ENCODE measurements at regions of chr5 and their contacts with region 1.

Region 1: GRCh38 chr5:106258591-106259125 is 1412.1 kb downstream of the EFNA5 start:
- DNase-seq: peak in 1 of 2 experiments; percentile 4
- H3K4me3 ChIP-seq: no peak overlapping the region
- H3K4me3 Mint-ChIP-seq: peak overlapping the region; percentile 66
- H3K27ac Mint-ChIP-seq: peak overlapping the region; percentile 86
- H3K4me1 ChIP-seq: peaks cover 30% of the 10 kb centered on the region
- H3K4me1 Mint-ChIP-seq: peaks cover 27% of the 10 kb centered on the region
- H3K27me3 ChIP-seq: no peaks in the 10 kb centered on the region
- H3K27me3 Mint-ChIP-seq: no peaks in the 10 kb centered on the region
- CTCF ChIP-seq: no peak

Region 2: DNA sequence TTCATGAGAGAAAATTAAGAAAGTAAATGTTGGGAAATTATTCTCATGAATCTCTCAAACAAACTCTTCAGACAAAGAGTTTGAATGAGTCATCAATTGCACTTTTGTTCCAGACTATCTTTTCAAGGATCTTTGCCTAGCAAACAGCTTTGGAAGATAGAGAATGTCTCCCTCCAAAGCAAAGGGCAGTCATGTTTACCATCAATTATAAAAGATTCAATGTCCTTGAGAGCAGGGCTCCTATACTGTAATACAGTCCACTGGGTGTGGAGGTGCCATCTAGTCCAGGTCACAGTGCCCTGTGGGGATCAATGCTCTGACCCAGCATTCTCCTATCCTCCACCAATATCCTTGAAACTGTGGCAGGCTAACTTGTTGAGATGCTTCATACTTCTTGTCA is 17.2 kb before region 1 on chr5:
- CTCF ChIA-PET with region 1: no interaction called
- POLR2A ChIA-PET with region 1: no interaction called
- intact Hi-C with region 1: loop called (anchors 1 kb)
- DNase-seq: peak in 1 of 2 experiments; percentile 10
- H3K4me3 ChIP-seq: no peak overlapping the region
- H3K4me3 Mint-ChIP-seq: no peak overlapping the region
- H3K27ac Mint-ChIP-seq: no peak overlapping the region
- H3K4me1 ChIP-seq: peaks cover 14% of the 10 kb centered on the region; the same call in 1 of the 2 replicates
- H3K4me1 Mint-ChIP-seq: peaks cover 6% of the 10 kb centered on the region
- H3K27me3 ChIP-seq: no peaks in the 10 kb centered on the region
- H3K27me3 Mint-ChIP-seq: no peaks in the 10 kb centered on the region
- CTCF ChIP-seq: no peak

Region 3: GRCh38 chr5:106331415-106331814 is 72.8 kb after region 1 on chr5:
- CTCF ChIA-PET with region 1: no interaction called
- POLR2A ChIA-PET with region 1: no interaction called
- intact Hi-C with region 1: no loop called
- DNase-seq: no peak
- H3K4me3 ChIP-seq: no peak overlapping the region
- H3K4me3 Mint-ChIP-seq: no peak overlapping the region
- H3K27ac Mint-ChIP-seq: no peak overlapping the region
- H3K4me1 ChIP-seq: no peaks in the 10 kb centered on the region
- H3K4me1 Mint-ChIP-seq: no peaks in the 10 kb centered on the region
- H3K27me3 ChIP-seq: no peaks in the 10 kb centered on the region
- H3K27me3 Mint-ChIP-seq: peaks cover 7% of the 10 kb centered on the region
- CTCF ChIP-seq: no peak

Region 4: GRCh38 chr5:106392766-106393165 is 134.1 kb after region 1 on chr5:
- CTCF ChIA-PET with region 1: no interaction called
- POLR2A ChIA-PET with region 1: no interaction called
- intact Hi-C with region 1: no loop called
- DNase-seq: no peak
- H3K4me3 ChIP-seq: no peak overlapping the region
- H3K4me3 Mint-ChIP-seq: no peak overlapping the region
- H3K27ac Mint-ChIP-seq: no peak overlapping the region
- H3K4me1 ChIP-seq: no peaks in the 10 kb centered on the region
- H3K4me1 Mint-ChIP-seq: no peaks in the 10 kb centered on the region
- H3K27me3 ChIP-seq: no peaks in the 10 kb centered on the region
- H3K27me3 Mint-ChIP-seq: no peaks in the 10 kb centered on the region
- CTCF ChIP-seq: no peak

Measured in Caco-2 (cell line).